ENCODE measurements at regions of chr2 and their contacts with region 1.

Region 1: GRCh38 chr2:166516712-166517303 is 22.8 kb upstream of the SCN7A start:
- DNase-seq: peak in 5 of 10 donors; percentile 12 to 66 (median 29)

Region 2: DNA sequence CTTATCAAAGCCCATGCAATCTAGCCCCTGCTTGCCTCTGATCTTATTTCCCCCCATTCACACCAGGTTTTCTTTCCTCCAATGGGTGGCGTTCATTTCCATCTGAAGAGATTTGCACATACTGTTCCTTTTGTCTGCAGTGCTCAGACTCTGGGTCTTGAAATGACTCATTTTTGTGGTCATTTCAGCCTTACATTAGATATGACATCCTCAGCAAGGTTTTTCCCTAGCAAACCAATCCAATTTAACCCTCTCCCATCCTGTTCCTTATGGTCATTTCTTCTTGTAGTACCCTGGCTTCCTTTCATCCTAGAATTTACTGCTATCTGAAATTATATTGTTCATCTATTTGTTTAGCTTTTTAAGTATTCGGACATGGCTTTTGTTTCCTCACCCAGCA is 346.5 kb before region 1 on chr2:
- intact Hi-C with region 1: loop called (anchors 10 kb)
- DNase-seq: no peak

Region 3: GRCh38 chr2:166468124-166469024 is 48.4 kb before region 1 on chr2:
- intact Hi-C with region 1: no loop called
- DNase-seq: no peak

Measured in posterior cingulate gyrus (tissue), 11 donors.